KBM-7 (cell line): ENCODE measurements at regions of chr2 and their contacts with region 1.

Region 1: DNA sequence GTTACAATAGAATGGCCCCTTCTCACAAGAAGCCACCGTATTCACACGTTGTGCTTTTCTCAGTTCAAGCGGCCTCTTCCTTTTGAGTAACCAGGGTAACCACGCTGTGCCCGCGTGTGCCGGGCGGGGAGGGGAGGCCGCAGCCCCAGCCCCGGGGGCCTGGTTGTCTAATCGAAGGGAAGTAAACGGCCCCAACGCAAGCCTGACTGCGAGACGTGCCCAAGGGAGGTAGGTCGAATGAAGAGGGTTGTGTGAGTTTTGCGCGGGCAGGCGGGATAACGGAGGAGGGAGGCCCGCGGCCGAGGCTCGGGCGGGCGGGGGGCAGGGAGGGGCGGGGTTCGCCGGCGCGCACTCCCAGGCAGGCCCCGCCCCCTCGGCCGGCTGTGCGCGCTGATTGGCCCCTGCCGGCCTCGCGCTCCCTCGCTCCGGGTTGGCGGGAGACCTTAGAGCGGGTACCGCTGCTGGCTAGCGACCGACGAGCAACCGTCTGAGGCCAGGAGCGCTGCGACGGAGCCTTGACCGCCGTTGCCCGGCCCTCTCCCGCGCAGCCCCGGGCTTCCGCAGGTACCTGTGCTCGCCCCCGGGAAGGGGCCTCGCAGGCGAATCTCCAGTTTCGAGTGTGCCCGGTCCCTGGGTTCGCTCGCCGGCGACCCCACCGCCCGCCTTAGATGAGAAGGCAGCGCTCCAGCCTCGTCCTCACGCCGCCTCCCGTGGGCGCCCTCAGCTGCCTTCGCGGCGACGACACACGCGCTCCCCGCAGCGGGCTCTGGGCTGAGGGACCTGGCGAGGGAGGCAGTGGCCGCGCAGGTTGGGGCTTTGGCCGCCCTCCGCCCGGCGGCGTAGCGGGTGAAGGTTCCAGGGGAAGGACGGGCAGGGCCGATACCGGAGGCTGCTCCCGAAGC is at the start of gene SPDYA:
- DNase-seq: no peak

Region 2: DNA sequence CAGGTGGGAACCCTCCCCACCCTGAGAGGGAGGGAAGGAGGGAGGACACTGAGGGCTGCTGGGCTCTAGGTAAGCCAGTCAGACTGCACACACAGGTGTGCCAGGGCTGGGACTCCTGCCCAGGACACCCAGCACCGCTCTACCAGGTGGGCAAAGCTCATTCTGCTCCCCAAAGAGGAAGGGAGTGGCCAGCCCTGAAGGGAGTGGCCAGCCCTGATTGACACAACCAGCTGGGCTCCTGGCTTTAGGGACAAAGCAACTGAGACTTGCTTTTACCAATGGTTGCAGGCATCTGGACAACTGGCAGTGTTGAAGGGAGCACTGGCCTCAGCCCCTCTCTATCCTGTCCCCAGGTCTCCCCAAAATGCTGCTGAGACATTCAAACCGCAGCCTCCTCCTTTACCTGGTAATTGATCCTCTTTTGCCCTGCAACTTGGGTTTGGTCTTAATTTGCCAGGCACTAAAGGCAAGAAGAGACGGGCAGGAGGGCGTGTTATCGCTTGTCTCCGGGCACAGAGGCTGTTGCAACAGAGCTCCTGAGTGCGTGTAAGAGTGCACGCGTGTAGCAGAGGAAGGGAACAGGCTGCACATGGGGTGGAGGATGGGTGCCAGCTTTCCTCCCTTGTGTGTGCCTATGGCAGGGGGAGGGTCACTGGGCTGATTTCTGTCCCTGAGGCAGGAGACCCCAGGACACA is 432.5 kb before region 1 on chr2:
- in situ Hi-C with region 1: no loop called
- DNase-seq: peak; percentile 74

Region 3: DNA sequence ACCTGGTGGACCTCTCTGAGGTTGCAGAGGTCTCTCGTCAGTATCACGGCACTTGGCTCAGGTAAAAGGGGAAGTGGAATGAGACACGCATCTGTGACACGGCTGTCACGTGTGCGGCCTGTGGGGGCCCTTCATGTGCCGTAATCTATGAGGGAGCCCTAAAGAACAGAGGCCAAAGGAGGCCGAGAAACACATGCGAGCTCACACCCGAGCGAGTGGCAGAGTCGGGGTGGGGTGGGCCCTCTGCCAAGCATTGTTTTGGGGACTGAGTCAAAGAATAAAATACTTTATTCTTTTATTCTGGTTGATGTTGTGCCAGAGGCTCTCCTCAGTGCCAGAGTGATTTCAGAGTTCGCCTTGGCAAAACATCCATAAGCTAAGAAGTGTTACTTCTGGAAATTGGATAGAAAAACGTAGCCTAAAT is 271.5 kb before region 1 on chr2:
- in situ Hi-C with region 1: no loop called
- DNase-seq: no peak

Region 4: GRCh38 chr2:28958689-28959088 is 148.1 kb after region 1 on chr2:
- in situ Hi-C with region 1: no loop called
- DNase-seq: peak; percentile 86

Region 5: DNA sequence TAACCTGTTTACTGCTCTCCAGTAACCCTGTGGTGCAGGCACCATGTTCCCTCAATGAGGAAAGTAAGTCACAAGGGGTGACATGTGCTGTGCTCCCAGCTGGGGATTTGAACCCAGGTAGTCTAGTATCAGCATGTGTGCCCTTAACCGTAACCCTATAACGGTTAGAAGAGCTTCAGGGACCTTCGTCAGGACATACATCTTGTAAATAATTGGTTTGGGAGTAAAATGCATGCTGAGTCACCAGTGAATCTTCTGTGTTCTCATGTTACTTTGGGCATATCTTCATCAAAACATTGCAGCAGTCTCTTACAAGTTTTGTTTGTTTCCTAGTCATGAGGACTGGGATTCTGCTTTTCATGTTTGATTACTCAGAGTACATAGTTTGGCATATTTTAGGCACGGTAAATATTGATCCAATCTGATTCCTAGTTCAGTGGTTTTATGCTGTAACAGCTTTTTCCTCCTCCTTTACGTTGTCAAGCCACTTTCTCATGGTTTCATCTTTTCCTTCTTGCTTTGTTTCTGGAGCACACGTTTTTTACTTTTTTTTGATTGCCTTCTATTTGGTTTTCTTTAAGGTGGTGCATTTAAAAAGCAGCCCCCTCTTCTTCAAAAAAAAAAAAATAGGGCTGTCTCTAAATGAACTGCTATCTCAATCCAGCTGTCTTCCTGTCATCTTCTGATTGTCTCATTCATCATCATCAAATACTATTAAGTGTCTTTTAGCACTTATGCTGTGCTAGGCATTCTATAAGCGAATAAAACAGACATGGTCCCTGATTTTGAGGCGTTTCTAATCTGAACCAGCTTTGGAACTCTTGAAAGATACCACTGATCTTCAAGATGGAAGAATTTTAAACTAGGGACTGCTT is 355.0 kb after region 1 on chr2:
- in situ Hi-C with region 1: no loop called
- DNase-seq: no peak

Region 6: GRCh38 chr2:29196792-29197788 is 386.5 kb after region 1 on chr2:
- in situ Hi-C with region 1: loop called (anchors 25 kb)
- DNase-seq: peak; percentile 61